Panc1 (cell line): ENCODE measurements at regions of chr10 and their contacts with region 1.

Region 1: DNA sequence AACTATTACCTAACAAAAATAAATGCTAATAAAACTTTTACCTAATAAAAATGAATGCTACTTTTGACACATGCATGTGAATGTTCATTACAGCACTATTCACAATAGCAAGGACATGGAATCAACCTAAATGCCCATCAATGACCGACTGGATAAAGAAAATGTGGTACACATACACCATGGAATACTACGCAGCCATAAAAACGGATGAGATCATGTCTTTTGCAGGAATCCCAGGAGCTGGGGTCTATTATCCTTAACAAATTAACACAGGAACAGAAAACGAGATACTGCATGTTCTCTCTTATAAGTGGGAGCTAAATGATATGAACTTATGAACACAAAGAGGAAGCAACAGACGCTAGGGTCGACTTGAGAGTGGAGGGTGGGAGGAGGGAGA is 88.1 kb upstream of the FAM204A start:
- DNase-seq: no peak
- ATAC-seq: no peak
- H3K4me3 ChIP-seq: no peak overlapping the region
- H3K27ac ChIP-seq: no peak overlapping the region
- H3K4me1 ChIP-seq: no peaks in the 10 kb centered on the region
- H3K27me3 ChIP-seq: peaks cover 8% of the 10 kb centered on the region; the same call in 1 of the 2 replicates
- CTCF ChIP-seq: no peak

Region 2: GRCh38 chr10:118449521-118449920 is 19.3 kb after region 1 on chr10:
- CTCF ChIA-PET with region 1: no interaction called
- POLR2A ChIA-PET with region 1: interaction called, 10 read pairs
- in situ Hi-C with region 1: no loop called
- intact Hi-C with region 1: no loop called
- DNase-seq: no peak
- ATAC-seq: no peak
- H3K4me3 ChIP-seq: no peak overlapping the region
- H3K27ac ChIP-seq: no peak overlapping the region
- H3K4me1 ChIP-seq: no peaks in the 10 kb centered on the region
- H3K27me3 ChIP-seq: peaks cover 48% of the 10 kb centered on the region
- CTCF ChIP-seq: no peak